ENCODE measurements at regions of chrX and their contacts with region 1.

Region 1: GRCh38 chrX:10119399-10119990 is 37.3 kb upstream of the CLCN4 start:
- DNase-seq: peak; percentile 91
- ATAC-seq: peak; percentile 84
- H3K4me3 ChIP-seq: no peak overlapping the region
- H3K27ac ChIP-seq: no peak overlapping the region
- H3K4me1 ChIP-seq: no peaks in the 10 kb centered on the region
- H3K27me3 ChIP-seq: no peaks in the 10 kb centered on the region
- CTCF ChIP-seq: peak; percentile 100; the same call in 1 of the 2 replicates
- POLR2A ChIP-seq: peak; percentile 68
- RAD21 ChIP-seq: peak; percentile 99

Region 2: GRCh38 chrX:8815464-8816065 is 1303.9 kb before region 1 on chrX:
- CTCF ChIA-PET with region 1: no interaction called
- POLR2A ChIA-PET with region 1: no interaction called
- dilution Hi-C with region 1: no loop called
- in situ Hi-C with region 1: loop called (anchors 25 kb)
- intact Hi-C with region 1: loop called (anchors 2 kb)
- DNase-seq: peak; percentile 40
- ATAC-seq: peak; percentile 88
- H3K4me3 ChIP-seq: no peak overlapping the region
- H3K27ac ChIP-seq: no peak overlapping the region
- H3K4me1 ChIP-seq: no peaks in the 10 kb centered on the region
- H3K27me3 ChIP-seq: no peaks in the 10 kb centered on the region; the same call in 1 of the 2 replicates
- CTCF ChIP-seq: peak; percentile 67
- POLR2A ChIP-seq: no peak
- RAD21 ChIP-seq: peak; percentile 63

Region 3: GRCh38 chrX:9730752-9731151 is 388.7 kb before region 1 on chrX:
- CTCF ChIA-PET with region 1: interaction called, 5 read pairs
- POLR2A ChIA-PET with region 1: no interaction called
- dilution Hi-C with region 1: no loop called
- in situ Hi-C with region 1: no loop called
- intact Hi-C with region 1: loop called (anchors 5 kb)
- DNase-seq: no peak
- ATAC-seq: no peak
- H3K4me3 ChIP-seq: no peak overlapping the region
- H3K27ac ChIP-seq: no peak overlapping the region
- H3K4me1 ChIP-seq: no peaks in the 10 kb centered on the region
- H3K27me3 ChIP-seq: no peaks in the 10 kb centered on the region
- CTCF ChIP-seq: no peak
- POLR2A ChIP-seq: no peak
- RAD21 ChIP-seq: no peak

Region 4: DNA sequence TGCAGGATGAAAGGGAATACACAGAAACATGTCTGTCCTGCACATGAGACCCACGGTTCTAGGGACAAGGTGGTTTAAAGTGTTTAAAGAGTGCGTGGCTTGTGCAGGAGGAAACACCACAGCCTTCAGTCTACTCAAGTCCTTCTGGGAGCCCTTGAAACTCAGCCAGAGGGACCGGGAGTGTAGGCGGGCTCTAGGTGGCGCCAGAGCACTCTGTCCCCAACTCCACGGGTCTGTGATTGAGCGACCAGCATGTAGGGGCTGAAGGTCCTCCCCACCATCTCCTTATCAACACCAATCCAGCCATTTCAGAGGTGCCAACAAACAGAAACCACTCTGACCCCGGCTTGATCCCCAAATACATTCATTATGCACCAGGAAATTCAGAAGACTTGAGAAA is 234.3 kb before region 1 on chrX:
- CTCF ChIA-PET with region 1: interaction called, 3 read pairs
- POLR2A ChIA-PET with region 1: no interaction called
- dilution Hi-C with region 1: no loop called
- in situ Hi-C with region 1: loop called (anchors 25 kb)
- intact Hi-C with region 1: loop called (anchors 2 kb)
- DNase-seq: peak; percentile 71
- ATAC-seq: peak; percentile 80
- H3K4me3 ChIP-seq: no peak overlapping the region
- H3K27ac ChIP-seq: no peak overlapping the region
- H3K4me1 ChIP-seq: peaks cover 8% of the 10 kb centered on the region
- H3K27me3 ChIP-seq: no peaks in the 10 kb centered on the region
- CTCF ChIP-seq: peak; percentile 73
- POLR2A ChIP-seq: peak; percentile 28; the same call in 1 of the 2 replicates
- RAD21 ChIP-seq: peak; percentile 78

Region 5: DNA sequence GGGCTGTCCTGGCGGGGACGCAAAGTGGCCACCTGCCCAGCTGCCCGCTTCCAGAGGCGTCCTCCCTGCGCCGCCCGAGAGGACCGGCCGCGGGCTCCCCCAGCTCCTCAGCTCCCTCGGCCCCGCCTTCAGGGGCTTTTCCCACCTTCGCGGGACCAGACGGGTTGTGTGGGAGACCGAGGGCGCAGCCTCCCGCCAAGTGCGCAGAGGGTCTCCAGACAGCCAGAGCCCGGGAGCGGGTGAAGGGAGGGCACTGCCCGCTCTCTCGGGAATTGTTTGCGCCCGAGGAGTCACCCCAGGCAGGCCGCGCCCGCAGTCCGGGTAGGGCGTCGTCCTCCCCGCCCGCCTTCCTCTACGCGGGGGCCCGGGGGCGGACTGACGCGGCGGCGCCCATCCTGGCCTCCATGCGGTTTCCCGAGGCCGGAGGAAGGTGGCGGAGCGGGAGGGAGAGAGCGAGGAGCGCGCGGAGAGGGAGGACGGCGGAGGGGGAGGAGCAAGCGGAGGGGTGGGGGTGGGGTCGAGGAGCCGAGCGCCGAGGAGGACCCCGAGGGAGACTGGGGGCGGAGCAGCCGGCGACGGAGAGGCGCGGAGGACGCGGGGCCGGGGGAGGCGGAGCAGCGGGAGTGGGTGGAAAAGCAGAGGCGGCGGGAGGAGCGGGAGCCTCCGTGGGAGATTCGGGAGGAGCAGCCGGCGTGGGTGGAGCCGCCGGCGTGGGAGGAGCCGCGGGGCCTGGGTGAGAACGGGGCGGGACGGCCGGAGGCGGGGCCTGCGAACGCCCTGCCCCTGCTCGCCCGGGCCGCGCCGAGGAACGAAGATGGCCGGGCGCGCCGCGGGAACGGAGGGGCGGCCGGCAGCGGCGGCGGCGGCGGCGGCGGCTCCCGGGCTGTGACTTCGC is 104.8 kb before region 1 on chrX:
- CTCF ChIA-PET with region 1: no interaction called
- POLR2A ChIA-PET with region 1: no interaction called
- dilution Hi-C with region 1: no loop called
- in situ Hi-C with region 1: no loop called
- intact Hi-C with region 1: loop called (anchors 5 kb)
- DNase-seq: peak; percentile 84
- ATAC-seq: peak; percentile 88
- H3K4me3 ChIP-seq: peak overlapping the region; percentile 74
- H3K27ac ChIP-seq: peak overlapping the region; percentile 74
- H3K4me1 ChIP-seq: peaks cover 8% of the 10 kb centered on the region
- H3K27me3 ChIP-seq: no peaks in the 10 kb centered on the region
- CTCF ChIP-seq: no peak
- POLR2A ChIP-seq: no peak; the same call in 1 of the 2 replicates
- RAD21 ChIP-seq: no peak

Region 6: GRCh38 chrX:11758400-11759171 is 1639.1 kb after region 1 on chrX:
- CTCF ChIA-PET with region 1: no interaction called
- POLR2A ChIA-PET with region 1: no interaction called
- dilution Hi-C with region 1: no loop called
- in situ Hi-C with region 1: no loop called
- intact Hi-C with region 1: no loop called
- DNase-seq: peak; percentile 73
- ATAC-seq: peak; percentile 79
- H3K4me3 ChIP-seq: peak overlapping the region; percentile 97
- H3K27ac ChIP-seq: peak overlapping the region; percentile 98
- H3K4me1 ChIP-seq: no peaks in the 10 kb centered on the region
- H3K27me3 ChIP-seq: no peaks in the 10 kb centered on the region
- CTCF ChIP-seq: peak; percentile 62
- POLR2A ChIP-seq: no peak
- RAD21 ChIP-seq: no peak

Measured in IMR-90 (cell line).